ENCODE measurements at regions of chr1 and their contacts with region 1.

Region 1: DNA sequence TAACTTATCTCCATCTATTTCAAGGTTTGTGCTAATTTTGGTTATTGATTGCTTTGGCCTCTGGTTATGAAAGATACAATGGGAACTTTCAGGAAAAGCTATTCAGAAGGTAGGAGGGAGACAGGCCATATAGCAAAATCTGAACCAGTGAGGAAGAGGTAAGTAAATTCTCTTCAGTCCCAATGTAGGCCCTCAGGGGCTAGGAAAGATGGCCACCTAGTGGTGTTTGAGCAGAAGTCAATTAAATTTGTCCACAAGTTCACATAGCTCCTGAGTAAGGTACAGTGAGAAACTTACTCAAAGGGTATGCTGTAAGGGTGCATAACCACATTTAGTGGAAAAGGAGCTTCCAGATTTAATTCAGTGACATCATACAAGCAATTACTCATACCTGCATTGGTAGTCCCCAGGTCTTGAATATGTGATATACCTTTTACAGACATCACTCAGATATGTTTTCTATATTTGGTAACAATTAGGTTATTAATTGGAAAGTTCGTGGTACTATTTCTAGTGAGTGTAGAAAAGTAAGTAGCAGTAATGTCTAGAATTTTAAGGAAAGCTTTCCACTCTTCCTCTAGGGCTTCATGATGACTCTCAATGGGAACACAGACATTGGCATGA is 21.4 kb upstream of the FMO1 start:
- DNase-seq: no peak
- ATAC-seq: no peak
- H3K4me3 ChIP-seq: no peak overlapping the region
- H3K27ac ChIP-seq: no peak overlapping the region
- H3K4me1 ChIP-seq: peaks cover 0 to 4% of the 10 kb centered on the region in 2 donors
- H3K27me3 ChIP-seq: no peaks in the 10 kb centered on the region
- CTCF ChIP-seq: peak; percentile 30 to 65 (median 63)
- POLR2A ChIP-seq: no peak

Region 2: DNA sequence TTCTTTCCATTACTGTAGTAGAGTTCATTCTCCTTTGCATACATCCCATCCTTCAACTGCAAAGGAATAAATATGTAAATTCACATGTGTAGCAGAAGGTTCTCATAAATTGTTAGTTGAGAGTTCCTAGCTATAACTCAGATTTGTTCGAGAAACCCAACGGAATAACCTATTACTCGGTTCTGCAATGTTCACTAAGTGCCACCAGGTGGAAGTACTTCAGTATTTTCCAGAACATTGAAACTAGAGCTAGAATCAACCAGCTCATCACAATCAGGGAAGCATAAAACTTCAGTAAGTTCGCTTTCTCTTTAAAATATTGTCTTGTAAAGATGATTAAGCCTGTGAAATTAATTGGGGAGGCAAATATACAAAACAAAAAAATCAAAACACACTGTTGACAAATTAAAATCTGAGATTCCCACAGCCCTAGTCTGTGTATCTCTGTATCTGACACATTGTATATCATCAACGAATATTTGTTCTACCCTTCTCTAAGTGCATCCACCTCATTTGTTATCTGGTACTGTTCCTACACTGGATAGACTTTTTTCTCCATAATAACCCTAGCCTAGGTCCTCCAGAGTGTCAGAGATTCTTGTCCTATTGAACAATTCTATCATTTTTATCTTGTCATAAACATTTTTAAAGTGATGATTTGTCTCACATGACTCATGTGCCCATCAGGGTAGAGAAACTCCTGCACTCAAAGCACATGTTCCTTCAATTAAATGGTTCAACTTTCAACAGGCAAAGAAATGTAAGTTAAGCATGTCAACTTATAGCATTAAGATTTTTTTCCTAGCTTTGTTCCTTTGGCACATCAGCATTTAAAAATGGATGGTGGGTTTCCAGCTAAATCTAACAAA is 259.6 kb before region 1 on chr1:
- in situ Hi-C with region 1: loop called in 1 of 4 experiments (anchors 25 kb)
- intact Hi-C with region 1: loop called (anchors 5 kb)
- DNase-seq: no peak
- ATAC-seq: peak in 1 of 2 donors; percentile 55
- H3K4me3 ChIP-seq: no peak overlapping the region
- H3K27ac ChIP-seq: no peak overlapping the region
- H3K4me1 ChIP-seq: no peaks in the 10 kb centered on the region
- H3K27me3 ChIP-seq: no peaks in the 10 kb centered on the region
- CTCF ChIP-seq: peak in 4 of 5 experiments; percentile 16 to 54 (median 26)
- POLR2A ChIP-seq: no peak

Region 3: DNA sequence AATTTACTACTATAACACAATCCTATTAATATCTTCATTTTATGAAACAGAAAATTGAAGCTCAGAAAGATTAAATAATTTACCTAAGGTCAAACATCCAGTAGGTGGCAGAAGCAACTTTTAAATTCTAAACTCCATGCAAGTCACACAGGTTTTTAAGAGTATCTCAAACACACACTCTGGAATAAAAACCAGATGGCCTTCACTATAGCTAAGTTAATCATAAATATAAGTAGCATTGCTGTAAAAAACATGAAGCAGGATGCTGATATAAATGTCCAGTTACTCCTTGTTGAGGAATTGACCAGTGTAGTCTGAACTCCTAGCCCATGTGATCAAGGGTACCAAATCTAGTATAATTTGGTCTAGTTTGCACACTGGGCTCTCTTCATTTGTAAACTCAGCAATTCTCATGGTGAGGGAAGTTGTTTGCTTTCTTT is 145.5 kb before region 1 on chr1:
- in situ Hi-C with region 1: loop called in 3 of 4 experiments (anchors 10 to 25 kb)
- intact Hi-C with region 1: loop called (anchors 1 kb)
- DNase-seq: no peak
- ATAC-seq: peak in 1 of 2 donors; percentile 24
- H3K4me3 ChIP-seq: no peak overlapping the region
- H3K27ac ChIP-seq: peak overlapping the region; percentile 13 to 52 (median 49)
- H3K4me1 ChIP-seq: peaks cover 0 to 4% of the 10 kb centered on the region in 2 donors
- H3K27me3 ChIP-seq: no peaks in the 10 kb centered on the region
- CTCF ChIP-seq: peak in 3 of 5 experiments; percentile 22 to 43 (median 29)
- POLR2A ChIP-seq: no peak

Region 4: DNA sequence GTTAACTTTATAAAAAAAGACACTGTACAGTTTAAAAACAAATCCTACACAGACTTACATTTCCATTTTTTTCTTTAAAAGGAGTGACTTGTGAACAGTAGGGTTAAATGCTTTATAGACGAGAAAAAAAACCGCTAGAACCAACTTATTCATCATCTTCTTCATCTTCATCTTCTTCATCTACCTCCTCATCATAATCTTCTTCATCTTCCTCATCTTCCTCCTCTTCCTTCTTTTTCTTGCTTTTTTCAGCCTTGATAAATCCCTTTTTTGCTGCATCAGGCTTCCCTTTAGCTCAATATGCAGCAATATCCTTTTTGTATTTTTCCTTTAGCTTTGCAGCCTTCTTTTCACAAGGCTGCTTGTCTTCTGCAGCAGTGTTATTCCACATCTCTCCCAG is 43.9 kb after region 1 on chr1:
- in situ Hi-C with region 1: no loop called
- intact Hi-C with region 1: no loop called
- DNase-seq: no peak
- ATAC-seq: no peak
- H3K4me3 ChIP-seq: no peak overlapping the region
- H3K27ac ChIP-seq: no peak overlapping the region
- H3K4me1 ChIP-seq: no peaks in the 10 kb centered on the region
- H3K27me3 ChIP-seq: no peaks in the 10 kb centered on the region
- CTCF ChIP-seq: no peak
- POLR2A ChIP-seq: no peak

Measured in gastrocnemius medialis (tissue), 4 donors.